Right cardiac atrium (tissue), 5 donors: ENCODE measurements at regions of chr14 and their contacts with region 1.

Region 1: DNA sequence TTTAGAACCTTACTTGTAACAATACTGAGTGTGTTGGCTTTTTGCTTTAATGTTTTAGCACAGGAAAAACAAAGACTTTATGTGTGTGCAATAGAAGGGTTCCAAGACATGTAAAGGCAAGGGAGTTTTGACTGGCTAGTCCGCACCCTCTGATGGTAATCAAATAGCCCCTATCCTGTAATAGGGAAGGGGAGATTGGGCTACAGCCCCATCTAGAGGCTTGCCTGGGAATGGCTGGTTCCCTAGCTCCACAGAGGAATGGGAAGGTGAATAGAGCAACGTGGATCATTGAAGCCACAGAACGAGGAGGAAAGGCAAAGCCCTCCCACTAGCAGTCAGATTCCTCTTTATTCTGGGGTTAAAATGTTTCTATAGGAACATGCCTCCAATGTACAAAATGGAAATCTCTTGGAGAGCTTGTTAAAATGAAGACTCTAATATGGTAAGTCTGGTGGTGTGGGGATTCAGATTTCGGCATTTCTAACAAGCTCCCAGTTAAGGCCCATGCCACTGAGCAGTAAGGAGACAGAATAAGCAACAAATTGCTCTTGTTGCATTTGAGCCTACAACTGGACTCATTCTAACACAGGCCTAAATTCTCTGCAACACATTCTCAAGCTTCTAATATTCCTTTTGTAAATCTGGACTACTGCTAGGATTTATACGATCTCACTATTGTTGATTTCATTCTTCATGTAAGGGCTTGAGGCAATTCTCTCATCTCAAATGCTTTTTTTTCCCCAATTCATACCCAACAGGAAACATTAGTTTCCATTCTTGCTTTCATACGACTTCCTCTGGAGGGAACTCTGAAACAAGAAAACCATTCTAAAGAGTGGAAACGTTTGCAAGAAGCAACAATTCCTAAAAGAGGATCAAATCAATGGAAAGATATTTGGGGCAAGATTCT is 57.1 kb downstream of the NIN start:
- DNase-seq: no peak
- ATAC-seq: peak; percentile 60 to 62
- H3K4me3 ChIP-seq: no peak overlapping the region
- H3K27ac ChIP-seq: no peak overlapping the region
- H3K4me1 ChIP-seq: peaks cover 1% of the 10 kb centered on the region
- H3K27me3 ChIP-seq: no peaks in the 10 kb centered on the region

Region 2: GRCh38 chr14:50599700-50600444 is 174.0 kb before region 1 on chr14:
- intact Hi-C with region 1: loop called in 3 of 4 experiments (anchors 5 to 10 kb)
- DNase-seq: no peak
- ATAC-seq: peak in 1 of 2 donors; percentile 51
- H3K4me3 ChIP-seq: no peak overlapping the region
- H3K27ac ChIP-seq: no peak overlapping the region
- H3K4me1 ChIP-seq: no peaks in the 10 kb centered on the region
- H3K27me3 ChIP-seq: no peaks in the 10 kb centered on the region

Region 3: DNA sequence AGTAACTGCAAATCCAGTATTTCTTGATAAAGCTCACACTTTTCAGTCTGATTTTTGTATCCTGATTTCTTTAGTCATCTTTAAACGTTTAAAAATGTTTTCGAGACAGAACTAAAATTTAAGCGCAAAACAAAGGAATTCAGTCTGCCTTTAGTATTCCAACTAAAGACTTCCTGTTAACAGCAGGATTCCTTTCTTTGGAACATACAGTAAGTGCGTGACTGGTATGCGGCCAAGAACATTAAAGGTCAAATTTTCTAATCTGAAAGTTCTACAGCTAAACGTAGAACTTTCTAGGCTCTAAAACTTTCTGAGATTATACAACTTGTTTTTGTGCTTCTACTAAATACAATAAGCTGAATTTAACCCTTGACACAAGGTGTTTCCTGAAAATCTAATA is 115.7 kb before region 1 on chr14:
- intact Hi-C with region 1: no loop called
- DNase-seq: peak in 2 of 3 donors; percentile 22 to 30
- ATAC-seq: peak; percentile 65 to 80
- H3K4me3 ChIP-seq: peak overlapping the region; percentile 35
- H3K27ac ChIP-seq: no peak overlapping the region
- H3K4me1 ChIP-seq: peaks cover 4% of the 10 kb centered on the region
- H3K27me3 ChIP-seq: no peaks in the 10 kb centered on the region

Region 4: GRCh38 chr14:51539571-51540037 is 765.7 kb after region 1 on chr14:
- intact Hi-C with region 1: no loop called
- DNase-seq: no peak
- ATAC-seq: no peak
- H3K4me3 ChIP-seq: no peak overlapping the region
- H3K27ac ChIP-seq: no peak overlapping the region
- H3K4me1 ChIP-seq: no peaks in the 10 kb centered on the region
- H3K27me3 ChIP-seq: no peaks in the 10 kb centered on the region